Panc1 (cell line): ENCODE measurements at regions of chrX and their contacts with region 1.

Region 1: GRCh38 chrX:68807818-68808217 is 21.0 kb upstream of the EFNB1 start:
- DNase-seq: no peak
- ATAC-seq: peak; percentile 85
- H3K4me3 ChIP-seq: no peak overlapping the region
- H3K27ac ChIP-seq: no peak overlapping the region
- H3K4me1 ChIP-seq: no peaks in the 10 kb centered on the region
- H3K27me3 ChIP-seq: no peaks in the 10 kb centered on the region
- CTCF ChIP-seq: peak; percentile 69

Region 2: DNA sequence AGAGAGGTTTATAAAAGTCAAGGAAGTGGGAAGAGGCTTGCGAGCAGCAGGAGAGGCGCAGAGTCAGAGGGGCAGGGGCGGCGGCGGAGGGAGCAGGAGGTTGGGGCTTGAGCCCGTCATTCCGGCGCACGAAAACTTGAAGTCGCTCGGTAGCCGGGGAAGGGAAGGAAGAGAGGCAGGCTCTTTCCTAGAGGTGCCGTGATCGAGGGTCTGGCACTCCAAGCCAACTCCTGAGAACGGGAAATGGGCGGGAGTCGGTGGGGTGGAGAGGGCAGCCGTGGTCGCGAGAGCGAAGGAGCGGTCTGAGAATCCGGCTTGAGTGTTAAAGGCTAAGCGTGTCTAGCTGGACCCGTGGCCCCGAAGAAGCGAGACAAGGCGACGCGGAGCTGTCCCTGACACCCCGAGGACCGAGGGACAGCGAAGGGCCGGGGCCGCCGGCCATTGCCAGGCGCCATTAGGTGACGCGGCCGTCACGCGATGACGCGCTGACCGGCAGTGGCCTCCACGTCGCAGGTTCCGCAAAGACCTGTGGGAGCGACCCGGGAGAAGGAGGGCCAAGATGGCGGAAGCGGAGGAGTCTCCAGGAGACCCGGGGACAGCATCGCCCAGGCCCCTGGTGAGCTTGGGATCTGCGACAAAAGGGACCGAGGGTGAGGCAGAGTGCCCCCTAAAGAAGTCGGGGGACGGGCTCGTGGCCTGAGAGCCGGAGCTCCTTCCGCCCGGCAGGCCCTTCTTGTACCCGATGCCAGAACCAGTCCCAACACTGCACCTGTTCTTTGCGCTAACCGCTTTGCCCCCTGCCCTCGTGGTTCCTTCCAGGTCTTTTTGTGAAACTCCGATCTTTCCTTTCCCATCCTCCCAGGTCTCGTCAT is 309.1 kb before region 1 on chrX and contains the start of gene YIPF6:
- CTCF ChIA-PET with region 1: no interaction called
- POLR2A ChIA-PET with region 1: no interaction called
- in situ Hi-C with region 1: no loop called
- intact Hi-C with region 1: no loop called
- DNase-seq: no peak
- ATAC-seq: peak; percentile 98
- H3K4me3 ChIP-seq: peak within 1 kb of the TSS; percentile 81 to 83
- H3K27ac ChIP-seq: peak within 1 kb of the TSS; percentile 90
- H3K4me1 ChIP-seq: peaks cover 4% of the 10 kb centered on the region; the same call in 1 of the 2 replicates
- H3K27me3 ChIP-seq: no peaks in the 10 kb centered on the region
- CTCF ChIP-seq: no peak
- total RNA-seq, gene YIPF6: 61.3 TPM

Region 3: DNA sequence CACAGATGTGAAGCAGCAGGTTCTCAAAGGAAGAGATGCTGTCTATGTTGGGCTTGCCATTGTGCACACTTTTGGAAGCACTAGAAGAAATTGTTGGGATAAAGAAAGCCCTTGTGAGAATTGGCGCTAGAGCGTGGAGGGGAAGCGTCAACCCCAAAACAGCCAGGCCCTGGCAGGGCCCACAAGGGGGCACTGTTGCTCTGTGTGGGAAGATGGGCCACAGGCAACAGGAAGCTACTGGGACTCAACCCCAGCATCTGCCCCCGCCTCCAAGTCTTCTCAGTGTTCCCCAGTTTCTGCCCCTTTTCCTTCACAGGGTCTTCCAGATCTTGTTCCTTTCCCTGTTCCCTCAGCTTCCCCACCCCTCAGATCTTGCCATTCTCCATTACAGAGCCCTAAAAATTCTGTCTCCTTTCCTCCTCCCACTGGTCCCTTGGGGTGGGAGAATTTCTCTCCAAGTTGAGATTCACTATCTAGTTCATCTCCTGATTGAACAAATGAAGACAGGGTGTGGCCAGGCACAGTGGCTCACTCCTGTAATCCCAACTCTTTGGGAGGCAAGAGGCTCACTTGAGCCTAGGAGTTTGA is 74.8 kb before region 1 on chrX:
- CTCF ChIA-PET with region 1: interaction called, 20 read pairs
- POLR2A ChIA-PET with region 1: no interaction called
- in situ Hi-C with region 1: no loop called
- intact Hi-C with region 1: no loop called
- DNase-seq: no peak
- ATAC-seq: peak; percentile 95
- H3K4me3 ChIP-seq: no peak overlapping the region
- H3K27ac ChIP-seq: no peak overlapping the region
- H3K4me1 ChIP-seq: no peaks in the 10 kb centered on the region
- H3K27me3 ChIP-seq: 0 out of 2 replicates have a peak, but pooled peaks cover 2% of the 10 kb centered on the region
- CTCF ChIP-seq: peak; percentile 85

Region 4: GRCh38 chrX:68945603-68946228 is 137.9 kb after region 1 on chrX:
- CTCF ChIA-PET with region 1: no interaction called
- POLR2A ChIA-PET with region 1: no interaction called
- in situ Hi-C with region 1: no loop called
- intact Hi-C with region 1: no loop called
- DNase-seq: no peak
- ATAC-seq: no peak
- H3K4me3 ChIP-seq: no peak overlapping the region
- H3K27ac ChIP-seq: no peak overlapping the region
- H3K4me1 ChIP-seq: no peaks in the 10 kb centered on the region
- H3K27me3 ChIP-seq: no peaks in the 10 kb centered on the region
- CTCF ChIP-seq: peak; percentile 32; the same call in 1 of the 2 replicates

Region 5: DNA sequence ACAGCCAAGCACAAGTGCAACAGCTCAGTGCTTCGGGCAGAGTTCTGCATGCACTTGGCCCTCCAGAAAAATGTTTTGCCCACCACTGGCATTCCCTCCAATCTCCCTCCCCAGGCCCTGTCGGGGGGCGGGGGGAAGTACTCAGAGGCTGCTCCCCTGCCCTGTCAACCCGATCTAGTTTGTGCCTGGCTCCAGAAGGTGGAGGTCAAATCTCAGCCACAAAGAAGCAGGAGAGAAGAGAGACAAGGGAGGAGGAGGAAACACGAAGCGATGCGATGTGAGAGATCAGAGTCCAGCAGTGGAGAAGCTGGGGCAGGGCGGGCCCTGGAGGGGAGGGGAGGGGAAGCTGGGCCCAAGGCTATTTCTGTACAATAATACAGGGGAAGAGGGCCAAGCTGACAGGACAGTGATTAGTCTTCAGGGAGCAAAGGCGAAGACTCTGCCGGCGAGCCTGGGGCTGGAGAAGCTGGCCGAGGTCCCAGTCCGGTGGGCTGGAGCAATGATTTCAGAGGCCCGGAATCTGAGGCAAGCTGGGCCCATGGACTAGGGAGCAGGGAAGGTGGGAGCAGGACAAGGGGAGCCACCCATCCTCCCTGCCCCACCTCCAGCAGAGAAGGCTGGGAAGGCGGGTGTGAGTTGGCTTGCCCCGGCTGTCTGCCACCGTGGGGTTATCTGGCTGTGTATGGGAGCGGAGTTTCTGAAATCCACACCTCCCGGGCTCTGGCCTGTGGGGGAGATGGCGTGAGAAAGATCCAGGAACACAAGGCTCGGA is 188.1 kb after region 1 on chrX:
- CTCF ChIA-PET with region 1: no interaction called
- POLR2A ChIA-PET with region 1: no interaction called
- in situ Hi-C with region 1: no loop called
- intact Hi-C with region 1: no loop called
- DNase-seq: no peak
- ATAC-seq: no peak
- H3K4me3 ChIP-seq: no peak overlapping the region
- H3K27ac ChIP-seq: no peak overlapping the region
- H3K4me1 ChIP-seq: no peaks in the 10 kb centered on the region
- H3K27me3 ChIP-seq: no peaks in the 10 kb centered on the region
- CTCF ChIP-seq: no peak

Region 6: GRCh38 chrX:69133921-69134542 is 326.2 kb after region 1 on chrX:
- CTCF ChIA-PET with region 1: no interaction called
- POLR2A ChIA-PET with region 1: no interaction called
- in situ Hi-C with region 1: no loop called
- intact Hi-C with region 1: no loop called
- DNase-seq: no peak
- ATAC-seq: peak; percentile 96
- H3K4me3 ChIP-seq: no peak overlapping the region
- H3K27ac ChIP-seq: no peak overlapping the region
- H3K4me1 ChIP-seq: no peaks in the 10 kb centered on the region
- H3K27me3 ChIP-seq: no peaks in the 10 kb centered on the region
- CTCF ChIP-seq: peak; percentile 73